ENCODE measurements at regions of chr19 and their contacts with region 1.

Region 1: DNA sequence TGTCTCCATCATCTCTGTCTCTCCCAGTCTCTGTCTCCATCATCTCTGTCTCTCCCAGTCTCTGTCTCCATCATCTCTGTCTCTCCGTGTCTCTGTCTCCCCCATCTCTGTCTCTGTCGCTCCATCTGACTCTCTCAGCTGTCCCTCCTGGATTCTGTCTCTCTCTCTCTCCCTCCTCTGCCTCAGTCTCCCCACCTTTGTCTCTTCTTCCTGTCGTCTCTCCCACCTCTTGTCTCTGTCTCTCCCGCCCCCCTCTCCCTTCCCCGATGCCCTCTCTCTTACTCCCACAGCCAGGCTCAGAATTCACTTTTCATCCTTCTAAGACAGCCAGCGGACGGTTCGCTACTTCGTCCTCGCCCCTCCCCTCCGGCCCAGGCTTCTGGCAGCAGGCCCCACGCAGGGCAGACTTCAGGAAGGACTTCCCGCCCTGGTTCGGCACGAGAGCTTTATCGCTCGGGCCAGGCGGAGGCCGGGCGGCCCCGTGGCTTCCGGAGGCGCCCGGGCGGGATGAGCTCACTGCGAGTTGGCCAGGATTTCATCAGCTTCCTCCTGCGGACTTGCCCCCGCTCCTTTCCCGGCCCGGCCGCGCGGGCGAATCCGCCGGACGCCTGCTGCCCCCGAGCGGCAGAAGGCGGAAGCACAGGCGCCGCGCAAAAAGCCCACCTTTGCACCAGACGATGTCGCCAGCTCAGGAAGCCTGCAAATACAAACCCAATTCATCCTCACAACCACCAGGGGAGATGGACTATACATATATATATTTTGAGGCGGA is 12.4 kb upstream of the CCDC9 start:
- DNase-seq: peak; percentile 91 to 96
- ATAC-seq: peak; percentile 92 to 95 (median 94)
- H3K4me3 ChIP-seq: peak overlapping the region; percentile 52
- H3K27ac ChIP-seq: peak overlapping the region; percentile 50
- H3K4me1 ChIP-seq: peaks cover 20% of the 10 kb centered on the region
- H3K27me3 ChIP-seq: peaks cover 0 to 30% (median 10%) of the 10 kb centered on the region in 3 donors
- CTCF ChIP-seq: peak; percentile 99

Region 2: DNA sequence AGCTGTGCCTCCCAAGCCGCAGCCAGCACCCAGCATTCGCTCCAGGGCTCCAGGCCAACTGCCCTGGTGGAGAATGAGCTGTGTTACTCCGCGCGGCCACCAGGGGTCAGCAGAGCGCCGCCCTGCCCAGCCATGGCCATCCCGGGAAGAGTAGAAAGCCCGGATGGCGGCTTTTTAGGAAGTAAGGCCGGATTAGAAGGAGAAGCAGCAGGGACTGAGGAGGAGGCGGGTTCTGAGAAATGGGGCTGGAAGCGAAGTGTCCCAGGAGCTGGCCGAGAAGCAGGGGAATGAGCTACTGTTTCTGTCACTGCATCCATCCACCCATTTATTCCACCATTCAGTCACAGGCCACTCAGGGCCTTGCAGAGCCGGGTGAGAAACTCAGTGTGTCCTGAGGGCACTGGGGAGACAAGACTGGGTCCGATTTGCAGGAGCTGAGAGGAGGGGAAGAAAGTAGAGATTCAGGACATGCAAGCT is 230.9 kb before region 1 on chr19:
- intact Hi-C with region 1: loop called in 1 of 2 experiments (anchors 10 kb)
- DNase-seq: peak; percentile 82 to 90
- ATAC-seq: peak; percentile 96 to 99 (median 98)
- H3K4me3 ChIP-seq: no peak overlapping the region
- H3K27ac ChIP-seq: no peak overlapping the region
- H3K4me1 ChIP-seq: peaks cover 6% of the 10 kb centered on the region
- H3K27me3 ChIP-seq: peaks cover 0 to 5% (median 0%) of the 10 kb centered on the region in 3 donors
- CTCF ChIP-seq: peak; percentile 99

Region 3: GRCh38 chr19:47095476-47096099 is 148.4 kb before region 1 on chr19:
- intact Hi-C with region 1: no loop called
- DNase-seq: peak in 1 of 2 donors; percentile 42
- ATAC-seq: no peak
- H3K4me3 ChIP-seq: no peak overlapping the region
- H3K27ac ChIP-seq: peak overlapping the region; percentile 69
- H3K4me1 ChIP-seq: peaks cover 60% of the 10 kb centered on the region
- H3K27me3 ChIP-seq: no peaks in the 10 kb centered on the region
- CTCF ChIP-seq: no peak

Region 4: GRCh38 chr19:47152224-47153017 is 91.5 kb before region 1 on chr19:
- intact Hi-C with region 1: loop called in 1 of 2 experiments (anchors 1 kb)
- DNase-seq: no peak
- ATAC-seq: no peak
- H3K4me3 ChIP-seq: no peak overlapping the region
- H3K27ac ChIP-seq: no peak overlapping the region
- H3K4me1 ChIP-seq: peaks cover 5% of the 10 kb centered on the region
- H3K27me3 ChIP-seq: no peaks in the 10 kb centered on the region
- CTCF ChIP-seq: no peak

Region 5: DNA sequence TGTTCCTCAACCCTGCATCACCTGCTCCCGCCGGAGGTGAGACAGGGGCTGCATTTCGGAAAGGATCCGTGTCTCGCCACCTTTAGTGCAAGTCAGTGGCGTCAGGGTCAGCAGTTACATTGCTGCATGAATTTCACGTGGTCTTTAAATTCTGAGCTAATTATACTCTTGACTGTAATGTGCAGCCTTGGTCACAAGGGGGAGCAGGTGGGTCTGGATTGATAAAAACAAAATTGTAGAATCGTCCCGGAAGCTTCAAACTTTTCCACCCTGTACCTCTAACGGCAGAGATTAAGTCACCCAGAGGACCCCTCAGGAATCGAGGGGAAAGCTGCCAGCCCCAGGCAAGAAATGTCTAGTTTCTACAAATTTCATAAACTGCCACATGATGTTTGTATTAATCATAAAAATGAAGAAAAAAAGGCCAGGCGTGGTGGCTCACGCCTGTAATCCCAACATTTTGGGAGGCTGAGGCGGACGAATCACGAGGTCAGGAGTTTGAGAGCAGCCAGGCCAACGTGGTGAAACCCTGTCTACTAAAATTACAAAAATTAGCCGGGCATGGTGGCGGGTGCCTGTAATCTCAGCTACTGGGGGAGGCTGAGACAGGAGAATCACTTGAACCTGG is 33.2 kb before region 1 on chr19:
- intact Hi-C with region 1: loop called (anchors 1 kb)
- DNase-seq: peak; percentile 71 to 79
- ATAC-seq: peak; percentile 81 to 91 (median 88)
- H3K4me3 ChIP-seq: no peak overlapping the region
- H3K27ac ChIP-seq: peak overlapping the region; percentile 3
- H3K4me1 ChIP-seq: no peaks in the 10 kb centered on the region
- H3K27me3 ChIP-seq: no peaks in the 10 kb centered on the region
- CTCF ChIP-seq: peak; percentile 83

Region 6: GRCh38 chr19:47232422-47233211 is 11.3 kb before region 1 on chr19:
- intact Hi-C with region 1: loop called in 1 of 2 experiments (anchors 1 kb)
- DNase-seq: no peak
- ATAC-seq: no peak
- H3K4me3 ChIP-seq: no peak overlapping the region
- H3K27ac ChIP-seq: peak overlapping the region; percentile 100
- H3K4me1 ChIP-seq: peaks cover 1% of the 10 kb centered on the region
- H3K27me3 ChIP-seq: no peaks in the 10 kb centered on the region
- CTCF ChIP-seq: no peak

Measured in psoas muscle (tissue), 8 donors.